ENCODE measurements at regions of chr14 and their contacts with region 1.

Region 1: GRCh38 chr14:63392236-63392635 is 73.5 kb upstream of the GPHB5 start:
- DNase-seq: no peak
- H3K4me3 ChIP-seq: no peak overlapping the region
- H3K27ac ChIP-seq: no peak overlapping the region
- H3K4me1 ChIP-seq: no peaks in the 10 kb centered on the region
- H3K27me3 ChIP-seq: no peaks in the 10 kb centered on the region
- CTCF ChIP-seq: no peak
- POLR2A ChIP-seq: no peak

Region 2: GRCh38 chr14:63543000-63543825 is 151.0 kb after region 1 on chr14 and contains the start of gene PPP2R5E:
- intact Hi-C with region 1: loop called (anchors 10 kb)
- DNase-seq: peak; percentile 98
- H3K4me3 ChIP-seq: peak within 1 kb of the TSS; percentile 92 to 96
- H3K27ac ChIP-seq: peak within 1 kb of the TSS; percentile 88 to 89
- H3K4me1 ChIP-seq: peaks cover 0 to 5% of the 10 kb centered on the region in 2 donors
- H3K27me3 ChIP-seq: no peaks in the 10 kb centered on the region
- CTCF ChIP-seq: peak in 3 of 4 experiments; percentile 6 to 24 (median 11)
- POLR2A ChIP-seq: peak; percentile 41 to 74
- total RNA-seq, gene PPP2R5E: 20.0 to 62.0 (median 42.3) TPM

Measured in uterus (tissue), 4 donors.